ENCODE measurements at regions of chr1 and their contacts with region 1.

Region 1: GRCh38 chr1:175217721-175218531 is 25.4 kb upstream of the KIAA0040 start:
- DNase-seq: no peak
- ATAC-seq: no peak
- H3K4me3 ChIP-seq: no peak overlapping the region
- H3K4me3 Mint-ChIP-seq: no peak overlapping the region
- H3K27ac ChIP-seq: no peak overlapping the region
- H3K27ac Mint-ChIP-seq: no peak overlapping the region
- H3K4me1 ChIP-seq: no peaks in the 10 kb centered on the region
- H3K4me1 Mint-ChIP-seq: peaks cover 32% of the 10 kb centered on the region
- H3K27me3 ChIP-seq: no peaks in the 10 kb centered on the region
- H3K27me3 Mint-ChIP-seq: no peaks in the 10 kb centered on the region
- CTCF ChIP-seq: no peak

Region 2: DNA sequence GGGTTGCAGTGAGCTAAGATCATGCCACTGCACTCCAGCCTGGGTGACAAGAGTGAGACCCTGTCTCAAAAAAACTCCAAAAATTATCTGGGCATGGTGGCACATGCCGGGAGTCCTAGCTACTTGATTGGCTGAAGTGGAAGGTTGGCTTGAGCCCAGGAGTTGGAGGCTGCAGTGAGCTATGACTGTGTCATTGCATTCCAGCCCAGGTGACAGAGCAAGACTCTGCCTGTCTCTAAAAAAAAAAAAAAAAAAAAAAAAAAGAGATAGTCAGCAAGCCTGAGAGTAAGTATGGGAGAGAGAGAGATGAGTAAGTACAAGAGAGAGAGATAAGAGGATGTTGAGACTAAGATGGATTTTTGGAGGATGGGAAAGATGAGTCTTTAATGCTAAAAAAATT is 399.0 kb before region 1 on chr1:
- CTCF ChIA-PET with region 1: no interaction called
- POLR2A ChIA-PET with region 1: no interaction called
- intact Hi-C with region 1: no loop called
- DNase-seq: no peak
- ATAC-seq: no peak
- H3K4me3 ChIP-seq: no peak overlapping the region
- H3K4me3 Mint-ChIP-seq: no peak overlapping the region
- H3K27ac ChIP-seq: no peak overlapping the region
- H3K27ac Mint-ChIP-seq: no peak overlapping the region
- H3K4me1 ChIP-seq: no peaks in the 10 kb centered on the region
- H3K4me1 Mint-ChIP-seq: peaks cover 4% of the 10 kb centered on the region
- H3K27me3 ChIP-seq: no peaks in the 10 kb centered on the region
- H3K27me3 Mint-ChIP-seq: no peaks in the 10 kb centered on the region
- CTCF ChIP-seq: no peak

Region 3: DNA sequence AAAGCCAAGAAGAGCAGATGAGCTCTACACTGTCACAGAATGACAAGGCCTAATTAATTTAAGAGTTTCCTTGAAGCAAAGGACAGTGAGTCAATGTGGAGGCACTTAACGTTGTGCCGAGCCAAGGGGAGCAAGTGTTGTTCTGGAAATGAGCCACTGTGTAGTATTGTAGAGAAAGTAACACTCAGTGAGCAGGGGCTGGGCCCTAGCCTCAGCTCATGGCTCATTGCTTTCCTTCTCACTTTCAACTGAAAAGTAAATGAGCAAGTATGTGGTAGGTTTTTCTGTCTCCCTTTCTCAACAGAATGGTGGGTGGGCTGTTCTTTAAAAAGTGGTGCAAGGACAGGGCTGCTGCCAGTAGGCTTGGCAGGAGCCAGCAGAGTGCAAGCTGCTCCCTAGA is 13.6 kb before region 1 on chr1:
- CTCF ChIA-PET with region 1: no interaction called
- POLR2A ChIA-PET with region 1: no interaction called
- intact Hi-C with region 1: no loop called
- DNase-seq: no peak
- ATAC-seq: no peak
- H3K4me3 ChIP-seq: no peak overlapping the region
- H3K4me3 Mint-ChIP-seq: no peak overlapping the region
- H3K27ac ChIP-seq: no peak overlapping the region
- H3K27ac Mint-ChIP-seq: no peak overlapping the region
- H3K4me1 ChIP-seq: peaks cover 14% of the 10 kb centered on the region
- H3K4me1 Mint-ChIP-seq: peaks cover 40% of the 10 kb centered on the region
- H3K27me3 ChIP-seq: no peaks in the 10 kb centered on the region
- H3K27me3 Mint-ChIP-seq: no peaks in the 10 kb centered on the region
- CTCF ChIP-seq: no peak

Region 4: DNA sequence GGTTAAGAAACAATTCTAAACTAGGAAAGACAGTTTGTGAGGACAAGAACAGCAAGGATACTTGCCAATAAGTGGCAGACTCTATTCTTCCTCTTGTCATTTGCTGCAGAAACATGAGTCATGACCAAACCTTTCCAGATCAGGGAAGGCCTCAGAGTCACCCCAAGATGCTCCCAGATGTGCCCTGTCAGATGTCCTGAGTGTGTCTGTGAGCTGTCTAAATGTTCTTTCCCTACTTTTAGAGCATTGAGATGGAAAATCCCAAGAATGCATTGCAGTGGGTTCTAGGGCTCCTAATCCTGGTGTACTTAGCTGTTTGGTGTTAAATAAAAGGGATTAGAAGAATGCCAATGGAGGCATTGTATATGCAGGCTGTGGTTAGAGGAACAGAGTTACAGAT is 32.1 kb after region 1 on chr1:
- CTCF ChIA-PET with region 1: no interaction called
- POLR2A ChIA-PET with region 1: no interaction called
- intact Hi-C with region 1: no loop called
- DNase-seq: no peak
- ATAC-seq: no peak
- H3K4me3 ChIP-seq: no peak overlapping the region
- H3K4me3 Mint-ChIP-seq: no peak overlapping the region
- H3K27ac ChIP-seq: no peak overlapping the region
- H3K27ac Mint-ChIP-seq: no peak overlapping the region
- H3K4me1 ChIP-seq: no peaks in the 10 kb centered on the region
- H3K4me1 Mint-ChIP-seq: no peaks in the 10 kb centered on the region
- H3K27me3 ChIP-seq: no peaks in the 10 kb centered on the region
- H3K27me3 Mint-ChIP-seq: no peaks in the 10 kb centered on the region
- CTCF ChIP-seq: no peak

Region 5: GRCh38 chr1:175267716-175268384 is 49.9 kb after region 1 on chr1:
- CTCF ChIA-PET with region 1: no interaction called
- POLR2A ChIA-PET with region 1: no interaction called
- intact Hi-C with region 1: loop called in 1 of 2 experiments (anchors 10 kb)
- DNase-seq: no peak
- ATAC-seq: no peak
- H3K4me3 ChIP-seq: no peak overlapping the region
- H3K4me3 Mint-ChIP-seq: no peak overlapping the region
- H3K27ac ChIP-seq: no peak overlapping the region
- H3K27ac Mint-ChIP-seq: no peak overlapping the region
- H3K4me1 ChIP-seq: no peaks in the 10 kb centered on the region
- H3K4me1 Mint-ChIP-seq: no peaks in the 10 kb centered on the region
- H3K27me3 ChIP-seq: no peaks in the 10 kb centered on the region
- H3K27me3 Mint-ChIP-seq: no peaks in the 10 kb centered on the region
- CTCF ChIP-seq: no peak

Region 6: DNA sequence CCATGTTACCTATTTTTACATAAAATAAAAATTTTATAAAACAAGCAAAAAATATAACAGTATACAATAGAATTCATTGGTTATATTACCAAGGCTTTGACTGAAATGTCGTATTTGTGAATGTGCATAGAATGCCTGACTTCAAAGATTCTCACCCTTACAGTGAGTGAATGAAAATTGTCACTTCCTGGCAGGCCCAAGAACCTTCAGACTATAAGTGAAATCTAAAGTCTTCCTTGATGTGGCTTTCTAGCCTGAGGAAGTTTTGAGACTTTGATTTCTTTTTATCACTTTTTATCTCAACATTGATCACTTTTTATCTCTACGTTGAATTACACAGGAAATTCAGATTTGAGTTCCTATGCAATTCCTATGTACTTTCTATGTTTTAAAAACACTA is 79.4 kb after region 1 on chr1:
- CTCF ChIA-PET with region 1: no interaction called
- POLR2A ChIA-PET with region 1: no interaction called
- intact Hi-C with region 1: loop called in 1 of 2 experiments (anchors 5 kb)
- DNase-seq: peak in 3 of 14 experiments; percentile 43 to 60 (median 51)
- ATAC-seq: peak; percentile 95
- H3K4me3 ChIP-seq: no peak overlapping the region
- H3K4me3 Mint-ChIP-seq: peak overlapping the region; percentile 54
- H3K27ac ChIP-seq: no peak overlapping the region
- H3K27ac Mint-ChIP-seq: no peak overlapping the region
- H3K4me1 ChIP-seq: peaks cover 9% of the 10 kb centered on the region
- H3K4me1 Mint-ChIP-seq: peaks cover 48% of the 10 kb centered on the region
- H3K27me3 ChIP-seq: peaks cover 0 to 3% of the 10 kb centered on the region in 2 experiments
- H3K27me3 Mint-ChIP-seq: peaks cover 5% of the 10 kb centered on the region
- CTCF ChIP-seq: no peak